Prostate gland (tissue), 2 donors: ENCODE measurements at regions of chr3 and their contacts with region 1.

Region 1: GRCh38 chr3:129490242-129491045 is 38.0 kb upstream of the RHO start:
- DNase-seq: peak; percentile 60
- H3K4me3 ChIP-seq: no peak overlapping the region
- H3K27ac ChIP-seq: peak overlapping the region; percentile 8 to 36
- H3K4me1 ChIP-seq: no peaks in the 10 kb centered on the region
- H3K27me3 ChIP-seq: no peaks in the 10 kb centered on the region
- CTCF ChIP-seq: peak; percentile 67 to 88 (median 78)
- POLR2A ChIP-seq: no peak

Region 2: GRCh38 chr3:127729556-127730056 is 1760.8 kb before region 1 on chr3:
- intact Hi-C with region 1: no loop called
- DNase-seq: no peak
- H3K4me3 ChIP-seq: no peak overlapping the region
- H3K27ac ChIP-seq: no peak overlapping the region
- H3K4me1 ChIP-seq: no peaks in the 10 kb centered on the region
- H3K27me3 ChIP-seq: no peaks in the 10 kb centered on the region
- CTCF ChIP-seq: no peak
- POLR2A ChIP-seq: no peak

Region 3: DNA sequence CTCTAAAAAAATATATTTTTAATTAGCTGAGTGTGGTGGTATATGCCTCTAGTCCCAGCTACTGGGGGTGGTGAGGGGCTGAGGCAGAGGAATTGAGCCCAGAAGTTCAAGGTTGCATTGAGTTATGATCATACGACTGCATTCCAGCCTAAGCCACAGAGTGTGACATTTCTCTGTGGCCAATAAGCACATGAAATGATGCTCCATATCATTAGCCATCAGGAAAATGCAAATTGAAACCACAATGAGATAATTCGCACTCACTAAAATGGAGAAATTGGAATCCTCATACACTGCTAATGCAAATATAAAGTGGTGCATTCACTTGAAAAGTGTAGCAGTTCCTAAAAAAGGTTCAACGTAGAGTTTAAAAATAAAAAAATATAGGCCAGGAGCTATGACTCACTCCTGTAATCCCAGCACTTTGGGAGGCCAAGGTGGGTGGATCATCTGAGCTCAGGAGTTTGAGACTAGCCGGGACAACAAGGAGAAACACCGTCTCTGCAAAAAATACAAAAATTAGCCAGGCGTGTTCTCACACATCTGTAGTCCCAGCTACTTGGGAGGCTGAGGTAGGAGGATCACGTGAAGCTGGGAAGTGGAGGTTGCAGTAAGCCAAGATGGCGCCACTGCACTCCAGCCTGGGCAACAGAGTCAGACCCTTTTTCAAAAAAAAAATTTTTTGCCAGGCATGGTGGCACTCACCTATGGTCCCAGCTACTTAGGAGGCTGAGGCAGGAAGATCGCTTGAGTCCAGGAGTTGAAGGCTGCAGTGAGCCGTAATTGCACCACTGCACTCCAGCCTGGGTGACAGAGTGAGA is 15.2 kb before region 1 on chr3:
- intact Hi-C with region 1: no loop called
- DNase-seq: no peak
- H3K4me3 ChIP-seq: no peak overlapping the region
- H3K27ac ChIP-seq: no peak overlapping the region
- H3K4me1 ChIP-seq: no peaks in the 10 kb centered on the region
- H3K27me3 ChIP-seq: no peaks in the 10 kb centered on the region
- CTCF ChIP-seq: no peak
- POLR2A ChIP-seq: no peak

Region 4: GRCh38 chr3:129558772-129559564 is 68.5 kb after region 1 on chr3:
- intact Hi-C with region 1: loop called (anchors 5 kb)
- DNase-seq: no peak
- H3K4me3 ChIP-seq: no peak overlapping the region
- H3K27ac ChIP-seq: peak overlapping the region in 1 of 2 donors; percentile 26
- H3K4me1 ChIP-seq: no peaks in the 10 kb centered on the region
- H3K27me3 ChIP-seq: no peaks in the 10 kb centered on the region
- CTCF ChIP-seq: no peak
- POLR2A ChIP-seq: no peak

Region 5: DNA sequence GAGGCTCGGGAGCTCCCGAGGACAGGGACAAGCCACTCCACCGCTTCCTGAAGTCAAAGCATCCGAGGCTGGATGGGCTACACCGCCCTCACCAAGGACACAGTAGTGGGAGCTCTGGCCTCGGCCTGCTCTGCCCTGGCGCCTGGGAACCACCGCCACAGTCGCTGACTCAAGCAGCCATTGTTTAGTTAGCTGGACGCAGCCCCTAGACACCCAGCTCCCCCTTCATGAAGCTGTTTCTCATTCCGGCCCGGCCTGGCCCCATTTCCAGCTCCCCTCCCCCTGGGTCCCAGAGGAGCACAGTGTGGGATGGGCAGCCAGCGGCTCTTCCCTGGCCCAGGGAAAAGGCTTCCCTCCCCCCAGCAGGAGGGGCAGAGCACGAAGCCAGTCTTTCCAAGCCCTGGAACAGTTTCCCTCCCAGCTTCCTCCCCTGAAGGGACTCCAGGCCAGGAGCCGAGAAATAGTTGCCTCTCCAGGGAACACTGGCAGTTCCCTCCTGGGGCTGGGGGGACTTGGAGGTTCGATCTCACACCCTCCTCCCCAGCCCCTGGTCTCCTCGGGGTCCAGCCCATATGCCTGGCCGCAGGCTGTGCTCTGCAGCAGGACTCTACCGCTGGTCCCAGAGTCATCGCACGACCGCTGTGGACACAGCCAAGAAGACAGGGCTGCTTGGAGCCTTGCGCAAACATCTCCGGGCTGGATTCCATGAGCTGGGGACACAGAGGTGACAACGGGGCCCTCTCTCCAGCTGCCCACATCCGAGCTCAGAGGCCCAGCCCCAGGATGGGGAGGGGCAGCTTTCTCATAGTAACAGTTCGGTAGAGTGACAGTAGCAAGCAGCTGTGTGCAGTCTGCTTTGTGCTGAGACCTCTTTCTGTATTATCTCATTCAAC is 106.0 kb after region 1 on chr3:
- intact Hi-C with region 1: loop called (anchors 10 kb)
- DNase-seq: no peak
- H3K4me3 ChIP-seq: no peak overlapping the region
- H3K27ac ChIP-seq: peak overlapping the region; percentile 61 to 72
- H3K4me1 ChIP-seq: peaks cover 15% of the 10 kb centered on the region
- H3K27me3 ChIP-seq: no peaks in the 10 kb centered on the region
- CTCF ChIP-seq: no peak
- POLR2A ChIP-seq: no peak